HepG2 (cell line): ENCODE measurements at regions of chr1 and their contacts with region 1.

Region 1: DNA sequence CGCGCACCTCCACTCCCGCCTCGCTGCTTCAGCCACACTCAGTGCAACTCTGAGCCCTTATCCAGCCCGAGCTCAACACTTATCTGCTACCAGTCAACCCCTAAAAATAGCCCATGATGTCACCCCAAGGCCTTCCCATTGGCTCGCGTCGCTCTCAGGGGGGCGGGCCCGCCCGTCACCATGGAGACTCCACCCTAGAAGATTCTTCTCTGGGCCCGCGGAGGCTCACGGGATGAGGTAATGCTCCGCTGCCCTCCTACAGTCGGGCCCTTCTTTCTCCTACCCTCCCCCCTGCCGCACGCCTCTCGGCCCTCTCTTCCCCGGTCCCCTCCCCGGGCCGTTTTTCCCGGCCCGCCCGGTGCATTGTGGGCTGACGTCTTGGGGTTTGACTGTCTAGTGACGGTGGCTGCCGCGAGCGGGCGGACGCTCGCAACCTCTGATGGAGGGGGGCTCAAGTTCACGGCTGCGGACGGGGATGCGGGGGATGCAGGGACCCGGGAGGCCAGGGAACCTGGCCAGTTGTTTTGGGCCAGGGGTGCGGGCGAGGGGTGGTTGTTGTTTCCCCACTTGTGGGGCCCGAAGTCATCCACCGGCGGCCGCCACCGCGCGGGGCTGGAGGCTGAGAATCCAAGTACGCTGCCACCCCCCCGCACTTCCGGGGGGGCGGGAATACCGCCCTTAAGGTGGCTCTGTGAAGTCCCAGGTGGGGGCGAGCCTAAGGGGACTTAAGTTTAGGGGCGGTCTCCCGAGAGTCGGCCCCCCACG is at the start of gene JUN:
- DNase-seq: peak; percentile 98
- ATAC-seq: peak; percentile 86
- H3K4me3 ChIP-seq: peak within 1 kb of the TSS; percentile 82 to 90 (median 87)
- H3K27ac ChIP-seq: peak within 1 kb of the TSS; percentile 86
- H3K4me1 ChIP-seq: peaks cover 36% of the 10 kb centered on the region
- H3K27me3 ChIP-seq: no peaks in the 10 kb centered on the region; a peak in 1 of 5 replicates
- CTCF ChIP-seq: 0 out of 2 replicates have a peak, but pooled peaks have one; percentile 19
- EP300 ChIP-seq: peak; percentile 47 to 89; a peak in 3 of 4 replicates
- POLR2A ChIP-seq: peak; percentile 99 to 100
- RAD21 ChIP-seq: no peak
- total RNA-seq, gene JUN: 13.3 and 22.3 TPM in 2 replicates

Region 2: GRCh38 chr1:58739856-58740466 is 44.2 kb before region 1 on chr1:
- CTCF ChIA-PET with region 1: no interaction called
- POLR2A ChIA-PET with region 1: no interaction called
- in situ Hi-C with region 1: loop called (anchors 5 kb)
- intact Hi-C with region 1: no loop called
- DNase-seq: peak; percentile 52
- ATAC-seq: no peak
- H3K4me3 ChIP-seq: no peak overlapping the region
- H3K27ac ChIP-seq: no peak overlapping the region
- H3K4me1 ChIP-seq: peaks cover 17% of the 10 kb centered on the region
- H3K27me3 ChIP-seq: peaks cover 0 to 7% of the 10 kb centered on the region in 2 experiments; a peak in 1 of 5 replicates
- CTCF ChIP-seq: peak; percentile 78
- EP300 ChIP-seq: no peak
- POLR2A ChIP-seq: no peak
- RAD21 ChIP-seq: peak; percentile 80; the same call in 1 of the 2 replicates

Region 3: GRCh38 chr1:58805716-58806571 is 21.8 kb after region 1 on chr1:
- CTCF ChIA-PET with region 1: no interaction called
- POLR2A ChIA-PET with region 1: interaction called, 28 read pairs
- in situ Hi-C with region 1: no loop called
- intact Hi-C with region 1: no loop called
- DNase-seq: peak; percentile 36
- ATAC-seq: no peak; the same call in 2 of the 3 replicates
- H3K4me3 ChIP-seq: no peak overlapping the region
- H3K27ac ChIP-seq: no peak overlapping the region
- H3K4me1 ChIP-seq: peaks cover 71% of the 10 kb centered on the region
- H3K27me3 ChIP-seq: no peaks in the 10 kb centered on the region
- CTCF ChIP-seq: no peak
- EP300 ChIP-seq: 0 out of 4 replicates have a peak, but pooled peaks of 1 of the 2 experiments have one; percentile 9
- POLR2A ChIP-seq: no peak
- RAD21 ChIP-seq: no peak

Region 4: GRCh38 chr1:58903514-58904298 is 119.5 kb after region 1 on chr1:
- CTCF ChIA-PET with region 1: no interaction called
- POLR2A ChIA-PET with region 1: interaction called, 24 read pairs
- in situ Hi-C with region 1: no loop called
- intact Hi-C with region 1: loop called (anchors 2 kb)
- DNase-seq: peak; percentile 82
- ATAC-seq: peak; percentile 84
- H3K4me3 ChIP-seq: peak overlapping the region; percentile 63 to 71 (median 66)
- H3K27ac ChIP-seq: peak overlapping the region; percentile 89
- H3K4me1 ChIP-seq: peaks cover 78% of the 10 kb centered on the region
- H3K27me3 ChIP-seq: no peaks in the 10 kb centered on the region
- CTCF ChIP-seq: no peak
- EP300 ChIP-seq: peak; percentile 2 to 52; a peak in 1 of 4 replicates
- POLR2A ChIP-seq: peak; percentile 65 to 90
- RAD21 ChIP-seq: peak; percentile 50; the same call in 1 of the 2 replicates

Region 5: DNA sequence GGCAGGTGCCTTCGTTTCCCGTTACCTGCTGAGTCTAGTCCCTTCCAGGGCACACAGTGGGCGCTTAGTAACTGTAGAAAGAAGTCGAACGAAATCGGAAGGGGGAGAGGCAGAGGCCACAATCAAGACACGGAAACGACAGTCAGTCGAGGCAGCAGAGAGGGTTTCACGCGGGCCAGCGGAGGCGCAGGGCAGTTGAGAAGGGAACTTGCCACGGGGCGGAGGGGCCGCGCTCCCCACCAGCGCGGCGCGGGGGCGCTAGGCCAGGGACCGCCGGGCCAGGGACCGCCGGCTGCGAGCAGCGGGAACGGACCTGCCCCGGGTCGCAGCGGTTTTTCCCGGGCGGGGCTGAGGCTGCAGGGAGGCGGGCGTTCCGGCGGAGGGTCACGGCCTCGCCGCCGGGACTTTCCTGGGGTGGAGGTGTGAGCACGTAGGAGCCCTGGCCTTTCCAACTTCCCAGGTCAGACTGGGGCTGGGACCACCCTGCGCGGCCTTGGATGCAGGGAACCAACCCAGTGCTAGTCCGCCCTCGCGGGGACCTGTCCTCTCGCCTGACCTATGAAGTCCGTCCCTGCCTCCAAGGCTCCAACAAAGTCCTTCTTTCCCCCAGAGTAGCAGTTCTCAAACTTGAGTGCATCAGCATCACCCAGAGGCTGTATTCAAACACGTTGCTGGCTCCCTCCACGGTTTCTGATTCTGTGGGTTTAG is 362.6 kb after region 1 on chr1:
- CTCF ChIA-PET with region 1: no interaction called
- POLR2A ChIA-PET with region 1: no interaction called
- in situ Hi-C with region 1: no loop called
- intact Hi-C with region 1: loop called (anchors 10 kb)
- DNase-seq: peak; percentile 3
- ATAC-seq: peak; percentile 87
- H3K4me3 ChIP-seq: peak overlapping the region; percentile 53 to 75 (median 58)
- H3K27ac ChIP-seq: no peak overlapping the region
- H3K4me1 ChIP-seq: peaks cover 44% of the 10 kb centered on the region
- H3K27me3 ChIP-seq: peaks cover 1 to 22% of the 10 kb centered on the region in 2 experiments; a peak in 3 of 5 replicates
- CTCF ChIP-seq: peak; percentile 59
- EP300 ChIP-seq: no peak
- POLR2A ChIP-seq: no peak
- RAD21 ChIP-seq: peak; percentile 67

Region 6: DNA sequence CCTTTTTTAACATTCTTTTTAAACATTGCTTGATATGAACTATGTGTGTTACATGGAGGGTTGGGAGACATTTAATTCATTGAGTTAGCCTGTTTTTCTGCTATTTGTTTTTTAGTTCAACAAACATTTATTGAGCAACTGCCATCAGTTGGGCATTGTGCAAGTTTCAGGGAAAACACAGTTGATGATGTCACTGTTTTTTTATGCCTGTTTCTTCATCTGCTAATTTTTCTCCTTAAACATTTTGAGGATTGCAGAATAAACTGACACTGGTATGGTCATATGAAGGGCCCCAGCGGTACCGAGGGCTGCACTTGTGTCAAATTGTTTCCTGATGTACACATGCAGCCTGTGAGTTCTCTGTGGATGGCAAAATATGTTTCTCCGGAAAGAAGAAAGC is 765.7 kb after region 1 on chr1:
- CTCF ChIA-PET with region 1: no interaction called
- POLR2A ChIA-PET with region 1: interaction called, 3 read pairs
- in situ Hi-C with region 1: no loop called
- intact Hi-C with region 1: loop called (anchors 10 kb)
- DNase-seq: peak; percentile 50
- ATAC-seq: no peak
- H3K4me3 ChIP-seq: no peak overlapping the region
- H3K27ac ChIP-seq: peak overlapping the region; percentile 39
- H3K4me1 ChIP-seq: peaks cover 50% of the 10 kb centered on the region
- H3K27me3 ChIP-seq: no peaks in the 10 kb centered on the region
- CTCF ChIP-seq: no peak
- EP300 ChIP-seq: peak in 1 of 2 experiments; percentile 71; a peak in 2 of 4 replicates
- POLR2A ChIP-seq: no peak
- RAD21 ChIP-seq: no peak